KBM-7 (cell line): ENCODE measurements at regions of chr5 and their contacts with region 1.

Region 1: GRCh38 chr5:38845526-38846378 is at the start of gene OSMR:
- DNase-seq: peak; percentile 47

Region 2: GRCh38 chr5:39080597-39081204 is 234.9 kb after region 1 on chr5:
- in situ Hi-C with region 1: loop called (anchors 25 kb)
- DNase-seq: peak; percentile 55